Endothelial cell of umbilical vein (primary cell): ENCODE measurements at regions of chr13 and their contacts with region 1.

Region 1: DNA sequence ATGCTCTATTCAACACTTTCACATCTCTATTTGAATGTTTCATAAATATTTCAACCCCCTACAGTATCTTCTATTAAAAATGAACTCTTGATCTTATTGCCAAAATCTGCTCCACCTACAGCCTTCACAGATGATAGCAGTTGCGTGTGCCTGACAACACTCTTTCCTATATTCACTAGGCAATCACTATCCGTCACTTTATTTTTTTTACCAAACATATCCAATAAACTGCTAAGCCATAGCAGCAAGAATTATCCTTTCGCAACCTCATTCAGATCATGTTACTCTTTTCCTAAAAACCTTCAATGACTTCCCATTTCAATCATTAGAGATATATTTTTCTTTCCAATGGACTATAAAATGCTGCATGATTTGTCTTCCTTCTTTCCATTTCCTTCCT is 629.8 kb upstream of the PCDH9 start:
- DNase-seq: no peak
- H3K4me3 ChIP-seq: no peak overlapping the region
- H3K27ac ChIP-seq: no peak overlapping the region
- H3K4me1 ChIP-seq: no peaks in the 10 kb centered on the region
- H3K27me3 ChIP-seq: no peaks in the 10 kb centered on the region
- CTCF ChIP-seq: no peak
- POLR2A ChIP-seq: no peak

Region 2: DNA sequence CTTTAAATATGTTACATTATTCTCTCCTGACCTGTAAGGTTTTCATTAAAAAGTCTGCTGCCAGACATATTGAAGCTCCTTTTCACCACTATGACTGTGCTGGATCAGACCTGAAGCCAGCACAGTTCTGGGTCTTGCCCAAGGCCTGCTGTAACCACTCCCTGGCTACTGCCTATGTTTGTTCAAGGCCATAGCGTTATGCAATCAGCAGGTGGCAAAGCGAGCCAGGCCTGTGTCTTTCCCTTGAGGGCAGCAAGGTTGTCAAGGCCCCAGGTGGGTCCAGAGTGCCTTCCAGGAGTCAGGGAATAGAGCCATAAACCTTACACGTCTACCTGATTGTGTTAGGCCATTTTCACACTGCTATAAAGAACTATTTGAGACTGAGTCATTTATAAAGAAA is 132.9 kb before region 1 on chr13:
- CTCF ChIA-PET with region 1: no interaction called
- POLR2A ChIA-PET with region 1: no interaction called
- dilution Hi-C with region 1: no loop called
- intact Hi-C with region 1: loop called (anchors 5 kb)
- DNase-seq: no peak
- H3K4me3 ChIP-seq: no peak overlapping the region
- H3K27ac ChIP-seq: no peak overlapping the region
- H3K4me1 ChIP-seq: no peaks in the 10 kb centered on the region
- H3K27me3 ChIP-seq: no peaks in the 10 kb centered on the region
- CTCF ChIP-seq: no peak
- POLR2A ChIP-seq: no peak

Region 3: DNA sequence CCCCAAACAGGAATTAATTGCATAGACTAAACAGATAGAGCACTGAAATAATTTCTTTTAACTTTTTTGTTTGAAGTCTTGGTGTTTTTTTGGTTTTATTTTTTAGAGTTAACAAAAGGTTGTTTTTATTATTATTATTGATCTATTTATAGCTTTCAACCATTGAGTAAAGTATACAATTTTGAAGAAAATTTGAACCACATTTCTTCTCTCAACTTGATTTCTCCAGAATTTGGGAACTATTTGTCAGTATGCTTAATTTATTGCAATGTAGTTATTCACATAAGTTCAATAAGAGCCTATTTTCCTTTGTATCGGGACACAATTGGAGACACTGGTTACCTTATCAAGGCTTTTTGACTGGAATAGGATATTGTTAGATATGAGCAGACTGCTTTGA is 415.9 kb after region 1 on chr13:
- CTCF ChIA-PET with region 1: no interaction called
- POLR2A ChIA-PET with region 1: no interaction called
- dilution Hi-C with region 1: no loop called
- intact Hi-C with region 1: no loop called
- DNase-seq: no peak
- H3K4me3 ChIP-seq: no peak overlapping the region
- H3K27ac ChIP-seq: no peak overlapping the region
- H3K4me1 ChIP-seq: no peaks in the 10 kb centered on the region
- H3K27me3 ChIP-seq: no peaks in the 10 kb centered on the region
- CTCF ChIP-seq: no peak
- POLR2A ChIP-seq: no peak